MCF 10A (cell line): ENCODE measurements at regions of chr13 and their contacts with region 1.

Region 1: DNA sequence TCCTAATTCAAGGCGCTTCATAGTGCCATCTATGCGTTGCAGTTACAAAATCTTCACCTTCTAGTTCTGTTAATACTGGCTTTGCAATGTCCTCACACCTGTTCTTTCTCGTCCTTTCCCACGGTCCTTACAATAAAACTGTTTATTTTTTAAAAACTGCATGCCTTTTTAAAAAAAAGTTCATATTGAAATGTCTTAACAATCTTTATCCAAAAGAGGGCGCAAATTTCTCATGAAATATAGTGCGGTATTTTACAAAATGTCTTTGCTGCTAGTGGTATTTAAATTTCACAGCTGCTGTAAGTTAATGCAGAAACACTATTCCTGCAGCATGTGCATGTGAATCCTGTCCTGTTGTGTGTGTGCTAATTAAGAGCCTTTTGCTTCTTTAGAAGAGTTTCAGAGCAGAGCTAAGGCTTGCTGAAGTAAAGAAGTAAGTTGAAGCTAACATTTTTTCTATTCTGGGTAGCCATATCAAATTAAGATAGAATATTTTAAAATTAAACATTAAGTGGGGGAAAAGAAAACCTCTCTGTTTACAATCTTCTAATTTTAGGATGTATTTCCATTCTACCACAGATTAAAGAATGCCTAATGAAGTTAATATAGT is 15.8 kb upstream of the CLDN10 start:
- DNase-seq: peak; percentile 68
- H3K4me3 Mint-ChIP-seq: no peak overlapping the region
- H3K27ac Mint-ChIP-seq: no peak overlapping the region
- H3K4me1 Mint-ChIP-seq: peaks cover 30% of the 10 kb centered on the region
- H3K27me3 Mint-ChIP-seq: no peaks in the 10 kb centered on the region
- CTCF ChIP-seq: peak; percentile 42

Region 2: GRCh38 chr13:95367309-95367843 is 169.4 kb before region 1 on chr13:
- CTCF ChIA-PET with region 1: no interaction called
- POLR2A ChIA-PET with region 1: no interaction called
- intact Hi-C with region 1: no loop called
- DNase-seq: no peak
- H3K4me3 Mint-ChIP-seq: no peak overlapping the region
- H3K27ac Mint-ChIP-seq: no peak overlapping the region
- H3K4me1 Mint-ChIP-seq: no peaks in the 10 kb centered on the region
- H3K27me3 Mint-ChIP-seq: peaks cover 1% of the 10 kb centered on the region
- CTCF ChIP-seq: no peak

Region 3: GRCh38 chr13:95494082-95494681 is 42.6 kb before region 1 on chr13:
- CTCF ChIA-PET with region 1: interaction called, 15 read pairs
- POLR2A ChIA-PET with region 1: interaction called, 3 read pairs
- intact Hi-C with region 1: loop called (anchors 1 kb)
- DNase-seq: peak; percentile 93
- H3K4me3 Mint-ChIP-seq: no peak overlapping the region
- H3K27ac Mint-ChIP-seq: no peak overlapping the region
- H3K4me1 Mint-ChIP-seq: peaks cover 6% of the 10 kb centered on the region
- H3K27me3 Mint-ChIP-seq: no peaks in the 10 kb centered on the region
- CTCF ChIP-seq: peak; percentile 71

Region 4: GRCh38 chr13:95547531-95548167 is 10.9 kb after region 1 on chr13:
- CTCF ChIA-PET with region 1: interaction called, 17 read pairs
- POLR2A ChIA-PET with region 1: interaction called, 10 read pairs
- intact Hi-C with region 1: no loop called
- DNase-seq: no peak
- H3K4me3 Mint-ChIP-seq: no peak overlapping the region
- H3K27ac Mint-ChIP-seq: no peak overlapping the region
- H3K4me1 Mint-ChIP-seq: peaks cover 6% of the 10 kb centered on the region
- H3K27me3 Mint-ChIP-seq: peaks cover 15% of the 10 kb centered on the region
- CTCF ChIP-seq: no peak

Region 5: GRCh38 chr13:95603887-95604533 is 67.3 kb after region 1 on chr13:
- CTCF ChIA-PET with region 1: interaction called, 26 read pairs
- POLR2A ChIA-PET with region 1: interaction called, 9 read pairs
- intact Hi-C with region 1: loop called (anchors 1 kb)
- DNase-seq: peak; percentile 97
- H3K4me3 Mint-ChIP-seq: peak overlapping the region; percentile 26
- H3K27ac Mint-ChIP-seq: peak overlapping the region; percentile 85
- H3K4me1 Mint-ChIP-seq: peaks cover 56% of the 10 kb centered on the region
- H3K27me3 Mint-ChIP-seq: no peaks in the 10 kb centered on the region
- CTCF ChIP-seq: no peak

Region 6: GRCh38 chr13:95644601-95645052 is 107.9 kb after region 1 on chr13 and contains the start of gene DZIP1:
- CTCF ChIA-PET with region 1: interaction called, 14 read pairs
- POLR2A ChIA-PET with region 1: interaction called, 7 read pairs
- intact Hi-C with region 1: no loop called
- DNase-seq: peak; percentile 80
- H3K4me3 Mint-ChIP-seq: peak within 1 kb of the TSS; percentile 82
- H3K27ac Mint-ChIP-seq: no peak within 1 kb of the TSS
- H3K4me1 Mint-ChIP-seq: peaks cover 5% of the 10 kb centered on the region
- H3K27me3 Mint-ChIP-seq: no peaks in the 10 kb centered on the region
- CTCF ChIP-seq: no peak
- total RNA-seq, gene DZIP1: 16.4 and 22.1 TPM in 2 replicates